ENCODE measurements at regions of chr11 and their contacts with region 1.

Region 1: DNA sequence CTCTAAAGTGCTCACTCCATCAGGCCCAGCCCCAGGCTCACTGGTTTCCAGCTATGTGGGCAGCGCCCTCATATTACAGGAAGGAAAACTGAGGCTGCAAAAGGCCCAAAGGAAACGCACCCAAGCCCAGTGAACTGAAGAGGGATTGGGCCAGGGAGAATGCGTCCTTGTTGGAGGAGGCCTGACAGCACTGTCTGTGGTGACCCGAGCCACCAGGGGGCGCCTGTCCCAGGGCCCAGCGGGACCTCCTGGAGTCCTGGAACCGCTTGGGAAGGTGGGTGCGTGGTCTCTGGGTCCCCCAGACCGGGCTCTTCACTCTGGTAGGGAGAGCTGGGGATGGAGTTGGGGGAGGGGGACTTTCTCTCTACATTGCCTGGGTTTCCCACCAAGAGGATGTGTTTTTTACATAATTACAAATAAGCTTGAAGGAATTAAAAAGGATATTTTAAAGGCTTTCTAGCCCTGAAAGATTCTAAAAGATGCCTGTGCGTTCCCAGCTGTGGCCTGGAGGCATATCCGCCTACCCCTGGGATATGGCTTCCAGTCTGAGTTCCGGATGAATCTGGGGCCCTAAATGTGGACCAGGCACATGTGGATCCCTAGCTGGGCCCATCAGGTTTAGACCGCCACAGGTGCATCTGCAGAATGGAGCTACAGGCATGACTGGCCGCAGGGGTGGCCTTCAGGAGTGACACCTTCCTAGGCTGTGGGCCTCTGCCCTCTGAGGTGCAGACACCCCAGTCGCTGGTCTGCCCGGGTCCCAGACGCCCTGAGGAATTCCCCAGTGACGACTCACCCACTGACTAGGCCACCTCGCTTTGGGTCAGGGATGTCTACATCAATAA is 4.2 kb downstream of the SPI1 start:
- DNase-seq: no peak
- ATAC-seq: peak; percentile 57
- H3K4me3 ChIP-seq: no peak overlapping the region
- H3K27ac ChIP-seq: peak overlapping the region; percentile 20; the same call in 1 of the 2 replicates
- H3K4me1 ChIP-seq: peaks cover 18% of the 10 kb centered on the region
- H3K27me3 ChIP-seq: no peaks in the 10 kb centered on the region
- CTCF ChIP-seq: peak; percentile 86 to 96 (median 94)
- EP300 ChIP-seq: no peak
- POLR2A ChIP-seq: peak; percentile 19; the same call in 1 of the 2 replicates
- RAD21 ChIP-seq: peak; percentile 73

Region 2: GRCh38 chr11:47329987-47330931 is 43.8 kb before region 1 on chr11:
- CTCF ChIA-PET with region 1: interaction called, 10 read pairs
- POLR2A ChIA-PET with region 1: interaction called, 3 read pairs
- RAD21 ChIA-PET with region 1: no interaction called
- SMC1A ChIA-PET with region 1: interaction called, 3 read pairs
- in situ Hi-C with region 1: no loop called
- intact Hi-C with region 1: no loop called
- DNase-seq: no peak
- ATAC-seq: no peak
- H3K4me3 ChIP-seq: no peak overlapping the region
- H3K27ac ChIP-seq: no peak overlapping the region
- H3K4me1 ChIP-seq: peaks cover 12% of the 10 kb centered on the region
- H3K27me3 ChIP-seq: no peaks in the 10 kb centered on the region
- CTCF ChIP-seq: peak in 1 of 3 experiments; percentile 3; a peak in 1 of 6 replicates
- EP300 ChIP-seq: no peak
- POLR2A ChIP-seq: no peak; the same call in 1 of the 2 replicates
- RAD21 ChIP-seq: no peak

Region 3: GRCh38 chr11:47387911-47388678 is 14.0 kb after region 1 on chr11:
- CTCF ChIA-PET with region 1: interaction called, 40 read pairs
- POLR2A ChIA-PET with region 1: interaction called, 94 read pairs
- RAD21 ChIA-PET with region 1: interaction called, 17 read pairs
- SMC1A ChIA-PET with region 1: interaction called, 36 read pairs
- in situ Hi-C with region 1: no loop called
- intact Hi-C with region 1: no loop called
- DNase-seq: no peak
- ATAC-seq: no peak
- H3K4me3 ChIP-seq: no peak overlapping the region
- H3K27ac ChIP-seq: no peak overlapping the region
- H3K4me1 ChIP-seq: peaks cover 16% of the 10 kb centered on the region
- H3K27me3 ChIP-seq: no peaks in the 10 kb centered on the region
- CTCF ChIP-seq: no peak
- EP300 ChIP-seq: no peak
- POLR2A ChIP-seq: no peak
- RAD21 ChIP-seq: no peak

Region 4: GRCh38 chr11:47399860-47400767 is 26.0 kb after region 1 on chr11:
- CTCF ChIA-PET with region 1: interaction called, 73 read pairs
- POLR2A ChIA-PET with region 1: interaction called, 94 read pairs
- RAD21 ChIA-PET with region 1: interaction called, 31 read pairs
- SMC1A ChIA-PET with region 1: interaction called, 22 read pairs
- in situ Hi-C with region 1: loop called (anchors 5 kb)
- intact Hi-C with region 1: no loop called
- DNase-seq: no peak
- ATAC-seq: peak; percentile 87
- H3K4me3 ChIP-seq: peak overlapping the region; percentile 76
- H3K27ac ChIP-seq: peak overlapping the region; percentile 89
- H3K4me1 ChIP-seq: peaks cover 30% of the 10 kb centered on the region
- H3K27me3 ChIP-seq: no peaks in the 10 kb centered on the region
- CTCF ChIP-seq: no peak
- EP300 ChIP-seq: no peak
- POLR2A ChIP-seq: peak; percentile 78
- RAD21 ChIP-seq: no peak

Region 5: GRCh38 chr11:47454180-47454644 is 80.1 kb after region 1 on chr11:
- CTCF ChIA-PET with region 1: interaction called, 8 read pairs
- POLR2A ChIA-PET with region 1: no interaction called
- RAD21 ChIA-PET with region 1: interaction called, 7 read pairs
- SMC1A ChIA-PET with region 1: no interaction called
- in situ Hi-C with region 1: no loop called
- intact Hi-C with region 1: loop called (anchors 5 kb)
- DNase-seq: peak; percentile 37
- ATAC-seq: peak; percentile 97
- H3K4me3 ChIP-seq: no peak overlapping the region
- H3K27ac ChIP-seq: no peak overlapping the region
- H3K4me1 ChIP-seq: no peaks in the 10 kb centered on the region
- H3K27me3 ChIP-seq: no peaks in the 10 kb centered on the region
- CTCF ChIP-seq: peak; percentile 80 to 87 (median 83)
- EP300 ChIP-seq: no peak
- POLR2A ChIP-seq: no peak
- RAD21 ChIP-seq: peak; percentile 81

Region 6: DNA sequence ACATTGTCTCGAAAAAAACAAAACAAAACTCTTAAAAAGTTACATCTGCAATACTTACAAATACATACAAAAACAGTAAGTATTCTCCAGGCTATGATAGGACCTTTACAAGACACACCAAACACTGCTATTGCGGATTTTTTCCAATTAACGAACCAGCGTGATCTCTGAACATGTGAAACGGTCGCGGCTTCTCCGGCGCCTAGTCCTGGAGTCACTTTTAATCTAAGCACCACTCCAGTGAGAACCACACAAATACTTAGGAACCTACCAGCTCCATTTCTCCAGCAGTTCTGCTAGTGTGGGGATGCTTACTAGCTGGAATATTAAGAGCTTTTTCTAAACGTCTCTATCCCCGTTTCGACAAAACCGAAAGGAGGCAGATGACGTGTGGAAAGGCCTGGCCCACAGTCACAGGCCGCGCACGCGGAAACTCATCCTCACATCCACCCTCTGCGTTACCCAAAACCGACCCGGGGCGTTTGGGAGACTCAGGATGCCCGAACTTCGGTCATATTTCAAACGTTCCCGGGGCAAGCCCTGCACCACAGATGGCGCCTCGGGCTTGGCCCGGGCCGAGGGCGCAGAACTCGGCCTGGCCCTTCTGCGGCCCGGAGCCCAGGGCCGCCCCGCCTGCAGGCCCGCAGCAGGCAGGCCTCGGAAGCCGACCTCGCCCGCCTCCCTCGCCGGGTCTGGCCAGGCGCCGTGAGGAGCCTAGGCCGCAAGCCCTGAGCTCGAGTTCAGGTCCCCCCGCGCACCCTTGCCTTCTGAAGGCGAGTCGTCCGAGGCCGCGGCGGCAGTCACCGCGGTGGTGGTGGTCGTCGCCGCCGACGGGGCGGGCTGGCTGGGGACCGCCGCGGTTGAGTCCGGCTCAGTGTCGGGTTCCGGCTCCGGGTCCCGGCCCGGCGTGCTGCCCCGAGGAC is 392.5 kb after region 1 on chr11:
- CTCF ChIA-PET with region 1: no interaction called
- POLR2A ChIA-PET with region 1: no interaction called
- RAD21 ChIA-PET with region 1: no interaction called
- SMC1A ChIA-PET with region 1: no interaction called
- in situ Hi-C with region 1: no loop called
- intact Hi-C with region 1: loop called (anchors 10 kb)
- DNase-seq: no peak
- ATAC-seq: peak; percentile 61
- H3K4me3 ChIP-seq: peak overlapping the region; percentile 83
- H3K27ac ChIP-seq: peak overlapping the region; percentile 99
- H3K4me1 ChIP-seq: no peaks in the 10 kb centered on the region
- H3K27me3 ChIP-seq: no peaks in the 10 kb centered on the region
- CTCF ChIP-seq: no peak
- EP300 ChIP-seq: no peak
- POLR2A ChIP-seq: no peak; the same call in 1 of the 2 replicates
- RAD21 ChIP-seq: no peak